Naive thymus-derived CD4-positive, alpha-beta T cell (primary cell): ENCODE measurements at regions of chr2 and their contacts with region 1.

Region 1: DNA sequence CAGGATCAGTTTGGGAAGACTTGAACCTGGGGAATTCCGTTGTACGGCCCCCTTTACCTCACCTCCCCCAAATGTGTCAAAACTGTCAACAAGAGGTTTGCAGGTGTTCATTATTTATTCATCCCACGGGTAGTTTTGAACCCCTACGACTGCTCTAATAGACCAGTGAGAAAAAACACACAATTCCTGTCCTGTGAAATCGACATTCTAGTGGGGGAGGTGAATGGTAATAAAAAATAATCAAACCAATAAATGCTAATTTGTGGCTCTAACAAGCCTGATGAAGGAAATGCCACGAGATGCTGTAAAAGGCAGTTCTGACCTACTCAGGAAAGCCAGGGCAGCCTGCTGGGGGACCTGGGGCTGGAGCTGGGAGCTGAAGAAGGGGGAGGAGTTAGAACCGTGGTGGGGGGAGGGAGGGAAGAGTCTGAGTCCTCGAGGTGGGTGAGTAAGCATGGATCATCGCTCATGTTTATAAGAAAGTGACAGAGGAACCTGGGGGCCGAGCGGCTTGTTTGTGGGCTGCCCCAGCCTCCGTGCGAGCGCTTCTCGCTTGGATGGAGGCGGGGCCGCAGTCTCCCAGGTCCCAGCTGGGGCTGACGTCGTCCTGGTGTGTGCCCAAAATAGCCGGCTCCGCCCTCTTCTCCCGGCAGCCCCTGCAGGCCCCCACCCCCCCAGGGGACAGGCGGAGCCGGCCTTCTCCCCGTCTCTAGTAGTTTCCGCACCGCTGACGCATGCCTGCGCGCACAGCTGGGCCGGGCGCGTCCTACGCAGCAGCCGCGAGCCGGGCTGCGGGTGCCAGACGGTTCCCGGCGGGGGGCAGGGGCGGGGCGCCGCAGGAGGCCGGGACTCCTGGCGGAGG is at the start of gene DNAJB2:
- DNase-seq: peak; percentile 94 to 100 (median 98)
- ATAC-seq: peak; percentile 91
- H3K4me3 ChIP-seq: peak within 1 kb of the TSS; percentile 73
- H3K4me3 Mint-ChIP-seq: peak within 1 kb of the TSS; percentile 85 to 99 (median 97)
- H3K27ac ChIP-seq: peak within 1 kb of the TSS; percentile 98
- H3K27ac Mint-ChIP-seq: peak within 1 kb of the TSS; percentile 97 to 100 (median 99)
- H3K4me1 ChIP-seq: peaks cover 22 to 33% of the 10 kb centered on the region in 2 donors
- H3K4me1 Mint-ChIP-seq: peaks cover 32 to 58% (median 53%) of the 10 kb centered on the region in 7 donors
- H3K27me3 ChIP-seq: no peaks in the 10 kb centered on the region
- H3K27me3 Mint-ChIP-seq: peaks cover 0 to 3% (median 0%) of the 10 kb centered on the region in 5 donors
- total RNA-seq, gene DNAJB2: 50.8 to 134 (median 113) TPM

Region 2: DNA sequence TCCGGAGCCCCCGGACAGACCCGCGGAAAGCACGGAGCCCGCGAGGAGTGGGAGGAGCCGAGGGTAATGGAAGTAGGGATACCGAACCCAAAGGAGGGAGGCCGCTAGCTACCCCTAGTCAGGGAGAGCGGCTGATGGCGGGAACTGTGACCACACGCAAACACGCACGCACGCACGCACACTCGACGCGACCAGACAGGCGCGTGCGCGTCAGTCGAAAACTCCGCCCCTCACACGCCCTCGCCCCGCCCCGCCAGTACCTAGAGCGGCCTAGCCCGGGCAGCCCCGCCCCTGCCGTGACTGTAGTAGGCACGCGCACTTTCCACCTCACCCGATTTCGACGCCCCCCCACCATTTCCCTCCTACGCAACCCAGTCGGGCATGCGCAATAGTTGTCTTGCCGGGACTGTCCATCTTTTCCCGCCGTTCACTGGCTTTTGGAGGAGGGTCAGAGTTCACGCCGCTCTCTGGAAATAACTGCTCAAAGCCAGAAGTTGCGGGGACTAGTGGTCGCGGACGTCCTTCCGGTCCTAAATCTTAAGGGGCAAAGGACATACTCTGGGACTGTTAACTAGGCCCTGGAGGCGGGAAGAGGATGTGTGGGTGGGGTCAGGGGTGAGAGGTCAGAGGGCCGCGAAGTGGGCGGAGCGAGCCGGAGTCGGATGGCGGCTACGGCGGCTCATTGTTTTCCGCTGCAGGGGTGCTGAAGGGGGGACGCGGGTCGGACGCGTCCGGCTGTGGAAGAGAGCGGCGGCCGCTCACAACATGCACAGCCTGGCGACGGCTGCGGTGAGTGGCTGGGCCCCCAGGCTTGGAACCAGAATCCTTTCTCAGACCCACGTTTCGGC is 710.5 kb before region 1 on chr2 and contains the starts of genes CNOT9 and USP37:
- CTCF ChIA-PET with region 1: no interaction called
- POLR2A ChIA-PET with region 1: no interaction called
- intact Hi-C with region 1: loop called (anchors 1 kb)
- DNase-seq: peak; percentile 99 to 100 (median 100)
- ATAC-seq: peak; percentile 95
- H3K4me3 ChIP-seq: peak within 1 kb of the TSS; percentile 78
- H3K4me3 Mint-ChIP-seq: peak within 1 kb of the TSS; percentile 90 to 100 (median 98)
- H3K27ac ChIP-seq: peak within 1 kb of the TSS; percentile 96
- H3K27ac Mint-ChIP-seq: peak within 1 kb of the TSS; percentile 97 to 100 (median 99)
- H3K4me1 ChIP-seq: peaks cover 22 to 31% of the 10 kb centered on the region in 2 donors
- H3K4me1 Mint-ChIP-seq: peaks cover 45 to 73% (median 64%) of the 10 kb centered on the region in 7 donors
- H3K27me3 ChIP-seq: no peaks in the 10 kb centered on the region
- H3K27me3 Mint-ChIP-seq: no peaks in the 10 kb centered on the region
- total RNA-seq, gene CNOT9: 44.7 to 99.6 (median 53.8) TPM
- total RNA-seq, gene USP37: 16.6 to 36.3 (median 28.1) TPM

Region 3: GRCh38 chr2:218876562-218877219 is 402.2 kb before region 1 on chr2:
- CTCF ChIA-PET with region 1: no interaction called
- POLR2A ChIA-PET with region 1: no interaction called
- intact Hi-C with region 1: loop called in 1 of 2 experiments (anchors 5 kb)
- DNase-seq: peak in 8 of 9 donors; percentile 53 to 85 (median 74)
- ATAC-seq: peak; percentile 24
- H3K4me3 ChIP-seq: no peak overlapping the region
- H3K4me3 Mint-ChIP-seq: peak overlapping the region in 3 of 10 donors; percentile 1 to 19 (median 3)
- H3K27ac ChIP-seq: no peak overlapping the region
- H3K27ac Mint-ChIP-seq: peak overlapping the region in 3 of 9 donors; percentile 48 to 53 (median 52)
- H3K4me1 ChIP-seq: peaks cover 26 to 42% of the 10 kb centered on the region in 2 donors
- H3K4me1 Mint-ChIP-seq: peaks cover 24 to 53% (median 43%) of the 10 kb centered on the region in 7 donors
- H3K27me3 ChIP-seq: peaks cover 8 to 18% of the 10 kb centered on the region in 2 donors
- H3K27me3 Mint-ChIP-seq: peaks cover 18 to 77% (median 29%) of the 10 kb centered on the region in 5 donors

Region 4: DNA sequence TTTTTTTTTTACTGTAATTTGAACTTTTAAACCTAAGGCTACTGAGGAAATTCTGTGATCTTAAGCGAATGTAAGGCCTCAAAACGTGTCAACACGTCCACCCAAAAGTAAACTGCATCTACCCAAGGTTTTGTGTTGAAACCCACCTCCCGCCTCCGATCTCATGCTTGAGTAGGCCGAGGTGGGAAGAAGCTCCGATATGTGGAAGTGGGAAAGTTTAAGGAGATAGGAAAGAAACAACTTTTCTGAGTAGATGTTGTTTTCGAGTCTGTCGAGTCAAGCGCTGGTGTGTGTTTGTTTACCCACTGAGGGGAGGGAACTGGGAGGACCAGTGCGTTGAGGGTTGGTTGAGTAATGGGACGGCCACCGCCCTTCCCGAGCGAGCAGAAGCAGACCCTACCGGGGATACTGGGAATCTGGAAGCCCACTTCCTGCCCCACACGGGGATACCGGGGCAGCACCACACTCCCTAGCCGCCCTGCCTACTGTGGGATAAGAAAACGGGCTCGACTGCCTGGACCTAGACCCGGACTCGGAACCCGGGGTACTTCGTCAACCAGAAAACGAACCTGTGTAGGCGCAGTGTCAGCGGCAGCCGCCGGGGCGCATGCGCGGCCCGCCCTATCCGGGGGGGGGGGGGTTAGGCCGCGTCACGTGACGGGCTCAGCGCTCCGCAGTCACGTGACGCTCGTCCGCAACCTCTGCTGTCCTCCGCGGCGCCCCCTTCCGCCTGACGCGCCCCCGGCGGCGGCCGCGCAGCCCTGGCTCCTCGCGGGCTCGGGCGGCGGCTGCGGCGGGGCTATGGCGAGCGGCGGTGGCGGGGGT is 101.1 kb before region 1 on chr2 and contains the start of gene RETREG2:
- CTCF ChIA-PET with region 1: interaction called, 6 read pairs
- POLR2A ChIA-PET with region 1: interaction called, 17 read pairs
- intact Hi-C with region 1: loop called (anchors 1 kb)
- DNase-seq: peak; percentile 79 to 86 (median 83)
- ATAC-seq: peak; percentile 73
- H3K4me3 ChIP-seq: peak within 1 kb of the TSS; percentile 97
- H3K4me3 Mint-ChIP-seq: peak within 1 kb of the TSS; percentile 90 to 99 (median 96)
- H3K27ac ChIP-seq: peak within 1 kb of the TSS; percentile 96
- H3K27ac Mint-ChIP-seq: peak within 1 kb of the TSS; percentile 97 to 100 (median 99)
- H3K4me1 ChIP-seq: peaks cover 44 to 47% of the 10 kb centered on the region in 2 donors
- H3K4me1 Mint-ChIP-seq: peaks cover 48 to 80% (median 69%) of the 10 kb centered on the region in 7 donors
- H3K27me3 ChIP-seq: no peaks in the 10 kb centered on the region
- H3K27me3 Mint-ChIP-seq: no peaks in the 10 kb centered on the region
- total RNA-seq, gene RETREG2: 70.2 to 124 (median 90.9) TPM

Region 5: GRCh38 chr2:219229305-219230058 is 49.4 kb before region 1 on chr2 and contains the starts of genes ANKZF1 and ATG9A:
- CTCF ChIA-PET with region 1: interaction called, 3 read pairs
- POLR2A ChIA-PET with region 1: interaction called, 38 read pairs
- intact Hi-C with region 1: loop called (anchors 1 kb)
- DNase-seq: peak; percentile 92 to 99 (median 99)
- ATAC-seq: peak; percentile 98
- H3K4me3 ChIP-seq: peak within 1 kb of the TSS; percentile 80
- H3K4me3 Mint-ChIP-seq: peak within 1 kb of the TSS; percentile 94 to 100 (median 98)
- H3K27ac ChIP-seq: peak within 1 kb of the TSS; percentile 90
- H3K27ac Mint-ChIP-seq: peak within 1 kb of the TSS; percentile 96 to 100 (median 96)
- H3K4me1 ChIP-seq: peaks cover 17 to 22% of the 10 kb centered on the region in 2 donors
- H3K4me1 Mint-ChIP-seq: peaks cover 33 to 83% (median 69%) of the 10 kb centered on the region in 7 donors
- H3K27me3 ChIP-seq: no peaks in the 10 kb centered on the region
- H3K27me3 Mint-ChIP-seq: no peaks in the 10 kb centered on the region
- total RNA-seq, gene ANKZF1: 117 to 287 (median 169) TPM
- total RNA-seq, gene ATG9A: 52.6 to 66.0 (median 60.9) TPM

Region 6: GRCh38 chr2:219294356-219295351 is 15.8 kb after region 1 on chr2:
- CTCF ChIA-PET with region 1: interaction called, 194 read pairs
- POLR2A ChIA-PET with region 1: interaction called, 74 read pairs
- intact Hi-C with region 1: loop called (anchors 1 kb)
- DNase-seq: peak; percentile 80 to 93 (median 90)
- ATAC-seq: peak; percentile 99
- H3K4me3 ChIP-seq: peak overlapping the region; percentile 47
- H3K4me3 Mint-ChIP-seq: peak overlapping the region; percentile 68 to 89 (median 82)
- H3K27ac ChIP-seq: peak overlapping the region; percentile 79
- H3K27ac Mint-ChIP-seq: peak overlapping the region; percentile 56 to 88 (median 84)
- H3K4me1 ChIP-seq: peaks cover 2 to 20% of the 10 kb centered on the region in 2 donors
- H3K4me1 Mint-ChIP-seq: peaks cover 11 to 34% (median 27%) of the 10 kb centered on the region in 7 donors
- H3K27me3 ChIP-seq: no peaks in the 10 kb centered on the region
- H3K27me3 Mint-ChIP-seq: peaks cover 0 to 9% (median 0%) of the 10 kb centered on the region in 5 donors

Region 7: GRCh38 chr2:219543601-219544358 is 264.9 kb after region 1 on chr2 and contains the starts of genes CHPF and TMEM198:
- CTCF ChIA-PET with region 1: no interaction called
- POLR2A ChIA-PET with region 1: interaction called, 3 read pairs
- intact Hi-C with region 1: loop called (anchors 1 to 5 kb)
- DNase-seq: peak; percentile 79 to 94 (median 88)
- ATAC-seq: peak; percentile 86
- H3K4me3 ChIP-seq: peak within 1 kb of the TSS; percentile 51
- H3K4me3 Mint-ChIP-seq: peak within 1 kb of the TSS; percentile 83 to 95 (median 90)
- H3K27ac ChIP-seq: peak within 1 kb of the TSS; percentile 78
- H3K27ac Mint-ChIP-seq: peak within 1 kb of the TSS; percentile 71 to 90 (median 78)
- H3K4me1 ChIP-seq: peaks cover 10 to 12% of the 10 kb centered on the region in 2 donors
- H3K4me1 Mint-ChIP-seq: peaks cover 18 to 30% (median 25%) of the 10 kb centered on the region in 7 donors
- H3K27me3 ChIP-seq: no peaks in the 10 kb centered on the region
- H3K27me3 Mint-ChIP-seq: peaks cover 0 to 18% (median 11%) of the 10 kb centered on the region in 5 donors
- total RNA-seq, gene CHPF: 4.3 to 15.3 (median 5.7) TPM
- total RNA-seq, gene TMEM198: 0.45 to 0.69 (median 0.50) TPM in 4 of 5 experiments, not detected in the other

Region 8: DNA sequence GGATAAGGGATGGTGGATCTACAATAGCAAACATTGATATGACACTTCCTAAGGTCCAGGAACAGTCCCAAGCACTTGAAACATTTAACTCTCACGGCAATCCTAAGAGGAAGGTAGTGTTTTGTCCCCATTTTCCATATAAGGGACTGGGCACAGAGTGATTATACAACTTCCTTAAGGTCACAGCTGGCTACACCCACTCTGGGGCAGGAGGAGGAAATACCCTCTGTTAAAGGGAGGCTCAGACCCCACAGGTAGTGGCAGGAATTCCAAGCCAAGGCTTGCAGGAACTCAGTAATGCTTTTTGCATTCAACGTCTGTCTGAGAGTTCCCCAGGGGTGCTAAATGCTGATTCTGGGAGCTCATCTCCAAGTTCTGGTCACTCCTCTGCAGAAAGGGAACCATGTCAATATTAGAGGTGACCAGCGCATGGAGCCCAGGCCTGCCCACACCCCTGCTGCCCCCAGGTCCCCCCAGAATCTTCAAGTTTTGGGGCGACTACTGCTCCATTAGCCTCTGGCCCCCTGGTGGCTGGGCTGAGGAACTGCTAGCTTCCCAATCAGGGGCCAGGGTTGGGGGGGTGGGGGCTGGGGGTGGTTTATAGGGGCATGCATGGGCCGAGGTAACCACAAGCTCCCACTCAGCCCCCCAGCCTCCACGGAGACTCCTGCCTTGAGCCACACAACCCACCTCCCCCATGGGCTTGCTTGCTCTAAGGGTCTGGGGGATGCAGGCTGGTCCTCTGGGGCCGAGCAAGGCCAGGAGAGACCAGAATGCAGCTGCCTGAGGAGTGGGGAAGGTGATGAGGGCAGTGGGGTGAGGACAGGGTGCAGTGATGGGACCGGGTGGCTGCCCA is 281.4 kb after region 1 on chr2:
- CTCF ChIA-PET with region 1: no interaction called
- POLR2A ChIA-PET with region 1: no interaction called
- intact Hi-C with region 1: no loop called
- DNase-seq: peak in 2 of 9 donors; percentile 33 to 41
- ATAC-seq: peak; percentile 67
- H3K4me3 ChIP-seq: no peak overlapping the region
- H3K4me3 Mint-ChIP-seq: no peak overlapping the region
- H3K27ac ChIP-seq: no peak overlapping the region
- H3K27ac Mint-ChIP-seq: no peak overlapping the region
- H3K4me1 ChIP-seq: no peaks in the 10 kb centered on the region
- H3K4me1 Mint-ChIP-seq: no peaks in the 10 kb centered on the region
- H3K27me3 ChIP-seq: no peaks in the 10 kb centered on the region
- H3K27me3 Mint-ChIP-seq: peaks cover 2 to 41% (median 16%) of the 10 kb centered on the region in 5 donors